HepG2 (cell line): ENCODE measurements at regions of chr1 and their contacts with region 1.

Region 1: GRCh38 chr1:149886396-149887195 is 12.8 kb upstream of the BOLA1 start:
- DNase-seq: peak; percentile 99
- ATAC-seq: peak; percentile 70
- H3K4me3 ChIP-seq: peak overlapping the region; percentile 64 to 76 (median 68); a peak in 5 of 6 replicates
- H3K27ac ChIP-seq: peak overlapping the region; percentile 95
- H3K4me1 ChIP-seq: peaks cover 45% of the 10 kb centered on the region
- H3K27me3 ChIP-seq: no peaks in the 10 kb centered on the region; a peak in 1 of 5 replicates
- CTCF ChIP-seq: no peak
- EP300 ChIP-seq: no peak
- POLR2A ChIP-seq: peak; percentile 81 to 95
- RAD21 ChIP-seq: no peak

Region 2: GRCh38 chr1:149844101-149844500 is 42.5 kb before region 1 on chr1:
- CTCF ChIA-PET with region 1: no interaction called
- POLR2A ChIA-PET with region 1: interaction called, 47 read pairs
- in situ Hi-C with region 1: no loop called
- intact Hi-C with region 1: no loop called
- DNase-seq: peak; percentile 43
- ATAC-seq: no peak
- H3K4me3 ChIP-seq: peak overlapping the region; percentile 79 to 99 (median 86); a peak in 5 of 6 replicates
- H3K27ac ChIP-seq: peak overlapping the region; percentile 85
- H3K4me1 ChIP-seq: peaks cover 46% of the 10 kb centered on the region
- H3K27me3 ChIP-seq: no peaks in the 10 kb centered on the region; a peak in 1 of 5 replicates
- CTCF ChIP-seq: no peak
- EP300 ChIP-seq: no peak
- POLR2A ChIP-seq: no peak
- RAD21 ChIP-seq: no peak

Region 3: DNA sequence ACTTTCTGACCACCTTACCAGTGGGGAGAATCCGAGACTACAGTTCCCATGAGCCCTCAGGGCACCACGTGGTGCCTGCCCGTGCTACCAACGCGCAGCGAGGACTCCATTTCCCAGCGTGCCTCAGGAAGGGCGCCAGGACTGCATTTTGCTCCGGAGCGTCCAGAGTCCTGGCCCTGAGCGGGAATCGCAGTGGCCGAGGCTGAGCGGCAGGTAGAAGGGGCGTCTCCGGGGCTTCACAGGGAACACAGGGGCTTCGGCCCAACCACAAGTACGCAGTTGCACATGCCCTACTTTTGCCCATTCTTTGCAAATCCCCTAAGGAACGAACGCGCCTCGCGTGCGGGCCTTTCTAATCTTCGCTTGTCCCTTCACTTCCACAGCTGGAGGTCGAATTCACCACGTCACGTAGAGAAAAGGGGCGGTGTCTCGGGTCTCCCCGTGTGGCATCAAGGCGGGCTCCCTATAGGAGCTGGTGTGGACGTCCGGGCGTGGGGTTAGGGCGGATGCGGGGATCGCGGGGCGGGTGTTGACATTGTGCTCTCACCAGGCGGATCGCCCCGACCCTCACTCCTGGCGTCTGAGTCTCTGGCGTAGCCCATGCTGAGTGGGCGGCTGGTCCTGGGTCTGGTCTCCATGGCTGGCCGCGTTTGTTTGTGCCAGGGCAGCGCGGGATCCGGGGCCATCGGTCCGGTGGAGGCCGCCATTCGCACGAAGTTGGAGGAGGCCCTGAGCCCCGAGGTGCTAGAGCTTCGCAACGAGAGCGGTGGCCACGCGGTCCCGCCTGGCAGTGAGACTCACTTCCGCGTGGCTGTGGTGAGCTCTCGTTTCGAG is 13.1 kb after region 1 on chr1 and contains the start of gene BOLA1:
- CTCF ChIA-PET with region 1: no interaction called
- POLR2A ChIA-PET with region 1: interaction called, 15 read pairs
- in situ Hi-C with region 1: no loop called
- intact Hi-C with region 1: no loop called
- DNase-seq: peak; percentile 78
- ATAC-seq: peak; percentile 99
- H3K4me3 ChIP-seq: peak within 1 kb of the TSS; percentile 3 to 62 (median 42); a peak in 4 of 6 replicates
- H3K27ac ChIP-seq: peak within 1 kb of the TSS; percentile 55
- H3K4me1 ChIP-seq: peaks cover 16% of the 10 kb centered on the region
- H3K27me3 ChIP-seq: no peaks in the 10 kb centered on the region
- CTCF ChIP-seq: no peak
- EP300 ChIP-seq: no peak
- POLR2A ChIP-seq: peak; percentile 59 to 83
- RAD21 ChIP-seq: no peak
- total RNA-seq, gene BOLA1: 3.1 and 4.2 TPM in 2 replicates

Region 4: GRCh38 chr1:149937060-149937705 is 50.6 kb after region 1 on chr1:
- CTCF ChIA-PET with region 1: interaction called, 6 read pairs
- POLR2A ChIA-PET with region 1: interaction called, 74 read pairs
- in situ Hi-C with region 1: no loop called
- intact Hi-C with region 1: loop called (anchors 1 kb)
- DNase-seq: peak; percentile 41
- ATAC-seq: 0 out of 3 replicates have a peak, but pooled peaks have one; percentile 4
- H3K4me3 ChIP-seq: peak overlapping the region in 2 of 3 experiments; percentile 49 to 59; a peak in 2 of 6 replicates
- H3K27ac ChIP-seq: no peak overlapping the region
- H3K4me1 ChIP-seq: peaks cover 54% of the 10 kb centered on the region
- H3K27me3 ChIP-seq: no peaks in the 10 kb centered on the region
- CTCF ChIP-seq: no peak
- EP300 ChIP-seq: no peak
- POLR2A ChIP-seq: no peak
- RAD21 ChIP-seq: no peak

Region 5: DNA sequence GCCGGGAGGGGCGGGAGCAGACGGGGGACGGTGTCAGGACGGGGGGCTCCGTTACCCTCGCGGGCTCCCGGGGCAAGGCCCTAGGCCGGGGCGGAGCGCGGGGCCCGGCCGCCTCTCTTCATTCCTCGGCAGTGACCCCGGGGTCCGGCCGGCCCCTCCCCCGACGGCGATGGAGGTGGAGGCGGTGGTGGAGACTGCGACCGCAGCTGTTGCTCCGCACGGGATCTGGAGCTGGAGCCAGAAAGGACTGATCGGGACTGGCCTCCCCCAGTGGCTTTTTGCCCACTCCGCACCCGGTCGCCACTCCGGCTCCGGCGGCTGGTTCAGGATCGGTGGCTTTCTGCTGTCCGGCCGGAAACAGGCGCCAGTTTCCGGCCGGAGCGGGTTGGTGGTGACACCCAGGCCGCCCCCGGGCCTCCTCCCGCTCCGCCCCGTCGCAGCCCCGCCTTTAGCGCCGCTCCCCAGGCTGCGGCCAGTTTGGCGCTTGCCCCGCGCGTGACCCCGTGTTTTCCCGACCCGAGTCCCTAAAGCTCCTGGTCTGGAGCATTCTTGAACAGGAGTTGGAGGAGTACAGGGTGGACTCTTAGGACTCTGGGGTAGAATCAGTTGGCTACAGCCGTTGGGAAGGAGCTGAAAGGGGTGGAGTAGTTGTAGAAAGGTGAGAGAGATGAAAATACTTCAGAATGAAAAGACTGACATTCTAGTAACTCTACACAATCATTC is 124.0 kb after region 1 on chr1 and contains the start of gene OTUD7B:
- CTCF ChIA-PET with region 1: interaction called, 4 read pairs
- POLR2A ChIA-PET with region 1: interaction called, 26 read pairs
- in situ Hi-C with region 1: no loop called
- intact Hi-C with region 1: no loop called
- DNase-seq: peak; percentile 66
- ATAC-seq: peak; percentile 88
- H3K4me3 ChIP-seq: peak within 1 kb of the TSS; percentile 89 to 90 (median 89)
- H3K27ac ChIP-seq: peak within 1 kb of the TSS; percentile 87
- H3K4me1 ChIP-seq: peaks cover 52% of the 10 kb centered on the region
- H3K27me3 ChIP-seq: no peaks in the 10 kb centered on the region; a peak in 1 of 5 replicates
- CTCF ChIP-seq: peak; percentile 41
- EP300 ChIP-seq: peak in 1 of 2 experiments; percentile 61; a peak in 2 of 4 replicates
- POLR2A ChIP-seq: peak; percentile 76 to 85
- RAD21 ChIP-seq: peak; percentile 62
- total RNA-seq, gene OTUD7B: 11.2 and 13.2 TPM in 2 replicates

Region 6: DNA sequence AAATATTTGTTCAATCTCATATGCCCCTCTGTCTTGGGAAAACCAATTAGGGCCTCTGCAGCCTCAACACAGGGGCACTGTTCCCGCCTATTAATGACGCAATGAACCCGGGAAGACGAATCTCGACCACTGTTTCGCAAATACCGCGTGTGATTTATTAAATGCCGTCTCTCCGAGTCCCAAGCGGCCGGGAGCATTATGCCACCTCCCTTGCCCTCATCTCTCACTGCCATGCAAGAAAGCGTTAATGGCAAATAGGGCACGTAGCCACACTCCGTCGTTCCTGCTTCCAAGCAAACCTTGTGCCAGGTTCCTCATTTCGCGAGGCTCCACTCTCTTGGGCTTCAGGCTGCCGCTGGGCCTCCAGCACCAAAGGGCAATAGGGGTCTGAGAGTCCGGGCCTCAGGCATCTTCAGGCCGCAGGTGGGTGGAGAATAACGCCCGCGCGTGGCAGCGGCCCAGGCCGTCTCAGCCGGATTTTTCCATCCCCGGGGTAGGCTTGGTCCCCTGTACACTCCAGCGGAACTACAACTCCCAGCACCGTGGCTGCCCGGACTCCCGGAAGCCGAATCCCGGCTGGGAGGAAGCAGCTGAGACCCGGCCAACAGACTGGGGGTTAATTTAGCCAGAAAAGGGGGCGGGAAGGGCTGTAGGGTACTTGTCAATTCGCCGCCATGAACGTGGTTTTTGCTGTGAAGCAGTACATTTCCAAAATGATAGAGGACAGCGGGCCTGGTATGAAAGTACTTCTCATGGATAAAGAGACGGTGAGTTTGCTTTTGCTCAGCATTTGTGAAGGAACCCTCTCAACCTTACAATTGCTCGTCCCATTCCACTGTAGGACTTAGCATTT is 180.8 kb after region 1 on chr1 and contains the start of gene VPS45:
- CTCF ChIA-PET with region 1: no interaction called
- POLR2A ChIA-PET with region 1: interaction called, 14 read pairs
- in situ Hi-C with region 1: no loop called
- intact Hi-C with region 1: no loop called
- DNase-seq: peak; percentile 93
- ATAC-seq: peak; percentile 99
- H3K4me3 ChIP-seq: peak within 1 kb of the TSS; percentile 58 to 91 (median 85)
- H3K27ac ChIP-seq: peak within 1 kb of the TSS; percentile 96
- H3K4me1 ChIP-seq: peaks cover 23% of the 10 kb centered on the region
- H3K27me3 ChIP-seq: no peaks in the 10 kb centered on the region; a peak in 1 of 5 replicates
- CTCF ChIP-seq: peak; percentile 13; the same call in 1 of the 2 replicates
- EP300 ChIP-seq: peak in 1 of 2 experiments; percentile 58; a peak in 1 of 4 replicates
- POLR2A ChIP-seq: peak; percentile 64 to 80
- RAD21 ChIP-seq: peak; percentile 45
- total RNA-seq, gene VPS45: 25.2 and 26.5 TPM in 2 replicates